HCT116 (cell line): ENCODE measurements at regions of chr15 and their contacts with region 1.

Region 1: DNA sequence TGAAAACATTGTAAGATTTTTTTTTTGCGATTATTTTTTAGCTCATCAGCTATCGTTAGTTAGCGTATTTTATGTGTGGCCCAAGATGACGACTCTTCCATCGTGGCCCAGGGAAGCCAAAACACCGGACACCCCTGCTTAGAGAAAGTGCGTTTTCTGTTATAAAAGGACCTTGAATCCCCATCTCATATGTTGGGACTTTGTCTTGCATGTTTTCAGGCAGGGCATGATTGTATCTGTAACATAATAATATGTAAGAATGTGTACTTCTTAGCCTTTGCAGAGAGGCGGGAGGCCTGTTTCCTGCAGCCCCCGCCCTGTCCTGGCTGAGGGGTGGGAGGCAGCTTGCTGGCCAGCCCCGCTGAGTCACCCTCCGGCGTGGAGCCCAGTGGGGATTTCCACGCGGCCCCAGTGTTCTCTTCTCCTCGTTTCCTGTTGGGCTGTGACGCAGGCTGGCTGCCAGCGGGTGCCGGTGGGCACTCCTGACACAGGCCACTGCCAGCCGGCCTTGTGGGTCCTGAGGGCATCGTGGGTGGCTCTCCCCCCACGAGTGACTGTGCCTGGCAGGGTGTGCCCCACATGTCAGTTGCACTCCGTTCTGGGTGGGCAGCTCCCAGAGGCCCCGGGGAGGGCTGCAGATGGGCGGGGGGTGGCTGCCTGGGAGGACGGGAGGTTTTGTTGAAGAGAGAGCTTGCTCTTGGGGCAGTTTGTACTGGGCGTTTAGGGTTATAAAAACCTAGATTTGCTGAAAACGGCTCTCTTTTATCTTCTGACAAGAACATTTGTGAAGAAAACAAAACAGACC is 55.6 kb downstream of the SMAD3 start:
- DNase-seq: no peak
- ATAC-seq: no peak
- H3K4me3 ChIP-seq: no peak overlapping the region
- H3K27ac ChIP-seq: peak overlapping the region; percentile 44
- H3K4me1 ChIP-seq: peaks cover 91 to 100% of the 10 kb centered on the region in 2 experiments
- H3K27me3 ChIP-seq: no peaks in the 10 kb centered on the region
- CTCF ChIP-seq: no peak
- POLR2A ChIP-seq: no peak
- RAD21 ChIP-seq: no peak

Region 2: DNA sequence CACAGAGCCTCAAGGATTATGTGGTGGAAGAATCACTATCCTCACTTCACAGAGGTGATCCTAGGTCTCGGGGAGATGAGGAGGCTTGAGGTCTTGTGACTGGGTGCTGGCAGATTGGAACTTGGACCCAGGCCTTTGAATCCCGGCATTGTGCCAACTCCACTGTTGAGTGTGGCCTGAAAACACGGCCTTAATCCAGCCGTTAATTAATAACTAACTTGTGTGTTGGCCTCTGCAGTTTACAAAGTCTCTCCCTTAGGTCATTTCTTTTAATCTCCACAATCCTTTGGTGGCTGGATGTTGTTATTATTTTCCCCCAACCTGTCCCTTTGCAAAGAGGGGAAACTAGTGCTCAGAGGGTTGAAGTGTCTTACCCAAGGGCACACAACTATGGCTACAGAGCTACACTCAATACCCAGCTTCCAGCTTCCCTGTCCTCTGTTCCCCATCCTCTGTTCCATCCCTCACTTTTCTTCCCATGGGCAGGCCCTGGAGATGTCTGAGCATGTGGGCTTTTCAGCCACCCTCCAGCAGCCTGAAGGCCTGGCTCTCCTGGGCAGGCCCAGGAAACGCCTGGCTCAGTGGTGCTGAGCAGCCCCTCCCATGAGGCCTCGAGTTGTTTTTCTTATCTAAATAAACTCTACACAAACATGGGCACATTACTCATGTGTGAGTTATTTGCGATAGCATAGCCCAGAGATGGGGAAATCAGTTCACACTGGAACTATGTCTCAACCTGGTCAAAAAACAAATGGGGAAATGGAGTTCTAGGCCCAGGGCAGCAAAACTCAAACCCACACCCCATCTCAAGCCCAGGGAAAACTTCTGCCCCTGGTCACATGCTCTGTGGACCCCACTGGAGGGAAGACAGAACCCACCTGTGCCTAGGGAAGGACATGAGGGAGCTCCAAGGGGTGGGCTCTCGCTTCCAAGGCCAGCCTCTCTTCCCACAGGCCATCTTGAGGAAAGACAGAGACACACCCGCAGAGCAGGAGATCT is 72.5 kb before region 1 on chr15:
- CTCF ChIA-PET with region 1: no interaction called
- POLR2A ChIA-PET with region 1: interaction called, 3 read pairs
- RAD21 ChIA-PET with region 1: no interaction called
- intact Hi-C with region 1: loop called (anchors 5 kb)
- DNase-seq: no peak
- ATAC-seq: peak; percentile 42
- H3K4me3 ChIP-seq: no peak overlapping the region
- H3K27ac ChIP-seq: peak overlapping the region; percentile 71
- H3K4me1 ChIP-seq: peaks cover 50 to 53% of the 10 kb centered on the region in 2 experiments
- H3K27me3 ChIP-seq: no peaks in the 10 kb centered on the region
- CTCF ChIP-seq: no peak
- POLR2A ChIP-seq: no peak
- RAD21 ChIP-seq: no peak

Region 3: GRCh38 chr15:67109141-67110034 is 11.7 kb before region 1 on chr15:
- CTCF ChIA-PET with region 1: no interaction called
- POLR2A ChIA-PET with region 1: interaction called, 23 read pairs
- RAD21 ChIA-PET with region 1: interaction called, 3 read pairs
- intact Hi-C with region 1: no loop called
- DNase-seq: no peak
- ATAC-seq: 0 out of 2 replicates have a peak, but pooled peaks have one; percentile 6
- H3K4me3 ChIP-seq: no peak overlapping the region
- H3K27ac ChIP-seq: peak overlapping the region; percentile 48
- H3K4me1 ChIP-seq: peaks cover 71 to 91% of the 10 kb centered on the region in 2 experiments
- H3K27me3 ChIP-seq: no peaks in the 10 kb centered on the region
- CTCF ChIP-seq: no peak
- POLR2A ChIP-seq: no peak
- RAD21 ChIP-seq: no peak

Region 4: GRCh38 chr15:67142767-67143100 is 21.7 kb after region 1 on chr15:
- CTCF ChIA-PET with region 1: interaction called, 3 read pairs
- POLR2A ChIA-PET with region 1: interaction called, 12 read pairs
- RAD21 ChIA-PET with region 1: no interaction called
- intact Hi-C with region 1: no loop called
- DNase-seq: no peak
- ATAC-seq: no peak
- H3K4me3 ChIP-seq: no peak overlapping the region
- H3K27ac ChIP-seq: no peak overlapping the region
- H3K4me1 ChIP-seq: peaks cover 52 to 97% of the 10 kb centered on the region in 2 experiments
- H3K27me3 ChIP-seq: no peaks in the 10 kb centered on the region
- CTCF ChIP-seq: no peak
- POLR2A ChIP-seq: no peak
- RAD21 ChIP-seq: no peak

Region 5: DNA sequence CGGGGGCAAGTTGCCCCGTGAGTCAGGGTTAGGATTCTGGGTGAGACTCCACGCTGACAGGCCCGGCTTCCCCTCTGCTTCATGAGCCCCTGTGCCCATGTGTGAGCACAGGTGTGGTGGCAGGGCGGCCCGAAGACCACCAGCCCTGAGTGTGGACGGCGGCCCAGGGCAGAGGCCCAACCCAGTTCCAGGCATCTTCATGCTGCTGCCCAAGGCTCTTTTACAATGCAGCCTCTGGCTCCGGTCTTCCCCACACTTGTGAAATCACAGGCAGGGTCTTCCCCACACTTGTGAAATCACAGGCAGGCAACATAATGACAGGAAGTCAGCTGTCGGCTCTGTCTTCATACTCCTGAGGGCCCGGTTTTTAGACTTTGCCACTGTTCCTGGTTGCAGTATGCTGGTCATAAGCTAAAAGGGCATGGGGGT is 54.6 kb after region 1 on chr15:
- CTCF ChIA-PET with region 1: no interaction called
- POLR2A ChIA-PET with region 1: interaction called, 3 read pairs
- RAD21 ChIA-PET with region 1: no interaction called
- intact Hi-C with region 1: loop called (anchors 1 kb)
- DNase-seq: no peak
- ATAC-seq: no peak
- H3K4me3 ChIP-seq: no peak overlapping the region
- H3K27ac ChIP-seq: peak overlapping the region; percentile 70
- H3K4me1 ChIP-seq: peaks cover 28 to 73% of the 10 kb centered on the region in 2 experiments
- H3K27me3 ChIP-seq: no peaks in the 10 kb centered on the region
- CTCF ChIP-seq: no peak
- POLR2A ChIP-seq: no peak
- RAD21 ChIP-seq: no peak